Activated CD8-positive, alpha-beta T cell treated with anti-CD3 and anti-CD28 coated beads, Interleukin-2, amount 10 ng/mL, durations not matched to agents 7 days and 5 days (primary cell): ENCODE measurements at regions of chr1 and their contacts with region 1.

Region 1: DNA sequence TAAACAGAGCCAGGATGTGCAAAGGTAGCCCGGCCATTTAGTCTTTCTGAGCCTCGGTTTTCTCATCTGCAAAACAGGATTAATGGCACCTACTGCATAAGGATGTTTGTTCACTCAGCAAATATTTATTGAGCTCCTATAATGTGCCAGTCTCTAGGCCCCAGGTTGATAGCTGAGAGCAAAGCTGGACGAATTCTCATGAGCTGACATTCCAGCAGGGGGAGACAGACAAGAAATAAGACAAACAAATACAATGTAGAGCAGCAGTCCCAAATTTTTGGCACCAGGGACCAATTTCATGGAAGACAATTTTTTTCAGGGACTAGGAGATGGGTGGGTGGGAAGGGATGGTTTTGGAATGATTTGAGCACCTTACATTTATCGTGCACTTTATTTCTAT is 74.3 kb upstream of the PAX7 start:
- DNase-seq: no peak
- ATAC-seq: no peak
- H3K4me3 Mint-ChIP-seq: no peak overlapping the region
- H3K27ac Mint-ChIP-seq: no peak overlapping the region
- H3K4me1 Mint-ChIP-seq: peaks cover 7% of the 10 kb centered on the region
- H3K27me3 Mint-ChIP-seq: peaks cover 27% of the 10 kb centered on the region

Region 2: DNA sequence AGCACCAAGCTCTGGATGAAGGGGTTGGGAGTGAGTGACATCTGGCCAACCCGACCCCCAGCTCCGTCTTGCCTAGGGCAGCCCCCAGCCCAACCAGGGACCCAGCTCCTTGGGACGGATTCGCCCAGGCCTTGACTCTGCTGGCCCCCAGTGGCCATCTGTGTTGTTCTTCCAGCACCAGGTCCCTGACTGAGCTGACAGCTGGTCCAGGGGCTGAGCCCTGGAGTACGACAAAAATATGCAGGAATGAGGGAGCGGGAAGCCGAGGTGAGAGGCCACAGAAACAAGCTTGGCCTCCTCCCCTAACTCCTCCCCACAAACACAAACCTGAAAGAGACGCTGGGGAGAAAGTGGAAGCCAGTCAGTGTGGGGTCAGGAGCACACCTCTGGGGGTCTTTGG is 19.3 kb after region 1 on chr1:
- CTCF ChIA-PET with region 1: interaction called, 19 read pairs
- POLR2A ChIA-PET with region 1: no interaction called
- DNase-seq: peak; percentile 56
- ATAC-seq: no peak
- H3K4me3 Mint-ChIP-seq: no peak overlapping the region
- H3K27ac Mint-ChIP-seq: no peak overlapping the region
- H3K4me1 Mint-ChIP-seq: peaks cover 2% of the 10 kb centered on the region
- H3K27me3 Mint-ChIP-seq: no peaks in the 10 kb centered on the region

Region 3: DNA sequence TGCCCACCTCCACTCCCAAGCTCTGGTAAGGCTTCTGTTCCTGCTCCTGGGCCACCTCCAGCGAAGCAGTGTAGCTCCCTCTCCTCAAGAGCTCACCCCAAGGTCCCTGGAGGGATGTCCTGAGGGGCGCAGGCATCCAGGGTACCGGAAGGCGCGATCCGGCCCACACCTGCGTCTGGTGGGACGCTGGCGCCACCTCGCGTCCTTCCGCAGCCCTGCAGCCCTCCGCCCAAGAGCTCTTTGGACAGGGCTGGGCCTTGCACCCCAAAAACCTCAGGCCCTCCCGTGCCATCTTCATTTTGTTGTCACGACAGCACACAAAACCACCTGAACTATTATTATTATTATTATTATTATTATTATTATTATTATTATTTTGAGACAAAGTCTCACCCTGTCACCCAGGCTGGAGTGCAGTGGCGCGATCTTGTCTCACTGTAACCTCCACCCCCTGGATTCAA is 25.1 kb after region 1 on chr1:
- CTCF ChIA-PET with region 1: interaction called, 19 read pairs
- POLR2A ChIA-PET with region 1: no interaction called
- DNase-seq: peak; percentile 58
- ATAC-seq: peak; percentile 61
- H3K4me3 Mint-ChIP-seq: no peak overlapping the region
- H3K27ac Mint-ChIP-seq: no peak overlapping the region
- H3K4me1 Mint-ChIP-seq: no peaks in the 10 kb centered on the region
- H3K27me3 Mint-ChIP-seq: peaks cover 2% of the 10 kb centered on the region